GM18951 (cell line): ENCODE measurements at regions of chr9 and their contacts with region 1.

Region 1: GRCh38 chr9:34591248-34591916 is 1.9 kb upstream of the CNTFR start:
- POLR2A ChIP-seq: no peak

Region 2: DNA sequence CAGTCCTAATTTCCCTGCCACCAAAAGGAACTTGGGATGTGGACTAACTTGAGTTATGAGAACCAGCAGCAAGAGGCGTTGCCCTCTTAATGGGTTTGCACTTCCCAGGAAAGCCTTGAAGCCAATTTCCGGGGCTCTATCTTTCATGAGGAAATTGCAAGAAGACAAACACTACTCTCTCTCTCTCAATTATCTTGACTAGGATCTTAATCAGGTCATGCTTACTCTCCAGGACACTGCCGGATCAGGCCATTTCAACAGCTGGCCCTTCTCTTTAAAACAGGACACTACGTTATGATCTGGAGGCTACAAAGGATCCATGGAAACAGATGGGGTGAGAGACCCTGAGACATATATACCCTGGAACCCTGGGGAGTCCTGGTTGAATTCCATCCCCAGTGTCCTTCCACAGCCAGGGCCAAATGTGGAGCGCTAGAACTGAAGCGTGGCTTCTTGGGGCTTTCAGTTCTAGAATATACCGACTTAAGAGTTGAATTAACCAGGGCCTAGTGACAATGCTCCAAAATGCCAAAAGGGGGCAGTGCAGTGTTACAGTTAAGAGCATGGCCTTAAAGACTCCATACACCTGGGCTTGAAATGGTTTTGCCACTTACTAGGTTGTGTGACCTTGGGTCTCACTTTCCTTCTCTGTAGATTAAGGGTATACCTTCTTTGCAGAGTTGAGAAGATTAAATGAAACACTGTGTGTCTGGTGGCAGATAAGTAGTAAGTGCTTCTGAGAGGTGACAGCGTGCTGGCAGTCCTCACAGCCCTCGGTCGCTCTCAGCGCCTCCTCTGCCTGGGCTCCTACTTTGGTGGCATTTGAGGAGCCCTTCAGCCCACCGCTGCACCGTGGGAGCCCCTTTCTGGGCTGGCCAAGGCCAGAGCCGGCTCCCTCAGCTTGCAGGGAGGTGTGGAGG is 154.1 kb before region 1 on chr9:
- in situ Hi-C with region 1: loop called (anchors 10 kb)
- POLR2A ChIP-seq: no peak

Region 3: GRCh38 chr9:35287986-35288632 is 696.7 kb after region 1 on chr9:
- in situ Hi-C with region 1: no loop called
- POLR2A ChIP-seq: no peak